ENCODE measurements at regions of chr4 and their contacts with region 1.

Region 1: GRCh38 chr4:48008021-48008596 is 8.4 kb downstream of the CNGA1 start:
- DNase-seq: no peak
- ATAC-seq: no peak

Region 2: GRCh38 chr4:47945930-47946726 is 62.0 kb before region 1 on chr4:
- intact Hi-C with region 1: no loop called
- DNase-seq: no peak
- ATAC-seq: no peak

Region 3: GRCh38 chr4:48079972-48080391 is 71.9 kb after region 1 on chr4:
- intact Hi-C with region 1: loop called in 1 of 2 experiments (anchors 10 kb)
- DNase-seq: no peak
- ATAC-seq: peak; percentile 30

Region 4: DNA sequence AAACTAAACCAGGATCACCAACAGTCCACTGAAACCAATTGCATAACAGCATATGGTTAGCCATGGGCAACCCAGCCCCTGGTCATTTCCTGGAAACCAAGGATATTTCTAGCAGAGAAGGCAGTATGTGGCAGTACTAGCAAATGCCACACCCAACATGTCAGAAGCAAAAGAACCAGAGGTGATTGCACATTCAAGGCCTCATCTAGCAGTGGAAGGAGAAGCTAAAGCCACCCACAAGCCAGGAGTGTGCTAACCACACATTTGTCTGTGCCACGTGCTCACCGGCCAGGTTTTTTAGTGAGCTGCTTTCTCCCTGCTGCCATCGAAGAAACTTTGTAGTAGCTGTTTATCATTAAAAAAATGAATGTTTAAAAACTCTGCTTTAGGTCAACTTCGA is 219.6 kb after region 1 on chr4:
- intact Hi-C with region 1: no loop called
- DNase-seq: no peak
- ATAC-seq: peak; percentile 42